Activated CD4-positive, alpha-beta T cell treated with anti-CD3 and anti-CD28 coated beads for 36 hours (primary cell): ENCODE measurements at regions of chr3 and their contacts with region 1.

Region 1: DNA sequence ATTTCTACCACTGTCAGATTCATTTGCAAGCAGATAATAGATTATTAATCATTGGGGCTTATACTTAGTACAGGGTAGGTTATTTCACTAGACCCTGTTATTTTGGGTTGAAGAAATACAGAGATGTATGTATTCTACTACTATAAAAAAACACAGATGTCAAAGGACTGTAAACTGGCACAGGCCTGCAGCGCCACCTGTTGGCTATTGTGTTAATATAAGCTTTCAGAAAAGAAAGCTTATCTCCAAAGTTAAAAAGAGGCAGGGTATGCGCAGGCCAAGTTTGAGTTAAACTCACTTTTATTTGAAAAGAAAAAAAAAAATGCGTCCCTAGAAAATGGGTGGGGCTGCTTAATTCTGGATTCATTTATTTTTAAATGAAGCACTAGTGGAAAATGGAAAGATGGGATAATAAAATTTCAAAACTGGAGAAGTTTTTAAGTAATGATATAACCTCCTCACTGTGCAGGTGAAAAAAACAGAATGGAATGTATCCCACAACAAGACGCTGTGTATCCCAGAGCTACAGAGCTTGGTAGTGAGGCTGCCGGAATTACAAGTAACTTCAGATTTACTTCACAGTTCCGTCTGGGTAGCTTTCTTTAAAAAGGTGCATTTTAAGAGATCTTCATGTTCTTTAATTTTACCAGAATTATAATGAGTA is 407.2 kb upstream of the TGFBR2 start:
- DNase-seq: peak; percentile 86
- ATAC-seq: peak; percentile 30
- H3K4me3 Mint-ChIP-seq: no peak overlapping the region
- H3K27ac Mint-ChIP-seq: no peak overlapping the region
- H3K4me1 Mint-ChIP-seq: peaks cover 2% of the 10 kb centered on the region
- H3K27me3 Mint-ChIP-seq: no peaks in the 10 kb centered on the region

Region 2: GRCh38 chr3:28667646-28668621 is 1531.3 kb before region 1 on chr3:
- CTCF ChIA-PET with region 1: no interaction called
- POLR2A ChIA-PET with region 1: no interaction called
- intact Hi-C with region 1: loop called in 1 of 2 experiments (anchors 5 kb)
- DNase-seq: peak; percentile 71
- ATAC-seq: peak; percentile 90
- H3K4me3 Mint-ChIP-seq: no peak overlapping the region
- H3K27ac Mint-ChIP-seq: peak overlapping the region; percentile 32
- H3K4me1 Mint-ChIP-seq: peaks cover 5% of the 10 kb centered on the region
- H3K27me3 Mint-ChIP-seq: peaks cover 15% of the 10 kb centered on the region

Region 3: DNA sequence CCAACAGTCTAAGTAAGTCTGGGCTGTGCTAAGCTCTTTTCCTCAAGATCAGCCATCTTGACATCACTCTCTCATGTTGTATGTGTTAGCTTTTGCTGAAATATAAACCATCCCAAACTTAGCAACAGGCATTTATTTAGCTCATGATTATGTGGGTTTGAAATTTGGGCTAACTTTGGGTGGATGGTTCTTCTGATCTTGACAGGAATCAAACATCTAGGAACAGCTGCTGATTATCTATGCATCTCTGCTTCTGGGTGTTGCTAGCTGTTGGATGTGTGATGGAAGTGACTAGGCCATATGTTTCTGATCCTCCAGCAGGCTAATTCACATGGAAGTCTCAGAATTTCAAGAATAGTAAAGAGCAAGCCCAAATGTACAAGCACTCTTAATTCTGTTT is 208.0 kb before region 1 on chr3:
- CTCF ChIA-PET with region 1: no interaction called
- POLR2A ChIA-PET with region 1: no interaction called
- intact Hi-C with region 1: no loop called
- DNase-seq: no peak
- ATAC-seq: no peak
- H3K4me3 Mint-ChIP-seq: no peak overlapping the region
- H3K27ac Mint-ChIP-seq: no peak overlapping the region
- H3K4me1 Mint-ChIP-seq: no peaks in the 10 kb centered on the region
- H3K27me3 Mint-ChIP-seq: peaks cover 7% of the 10 kb centered on the region

Region 4: GRCh38 chr3:30012941-30013543 is 186.2 kb before region 1 on chr3:
- CTCF ChIA-PET with region 1: interaction called, 25 read pairs
- POLR2A ChIA-PET with region 1: no interaction called
- intact Hi-C with region 1: loop called (anchors 1 to 10 kb)
- DNase-seq: peak; percentile 72
- ATAC-seq: no peak
- H3K4me3 Mint-ChIP-seq: no peak overlapping the region
- H3K27ac Mint-ChIP-seq: no peak overlapping the region
- H3K4me1 Mint-ChIP-seq: no peaks in the 10 kb centered on the region
- H3K27me3 Mint-ChIP-seq: no peaks in the 10 kb centered on the region

Region 5: DNA sequence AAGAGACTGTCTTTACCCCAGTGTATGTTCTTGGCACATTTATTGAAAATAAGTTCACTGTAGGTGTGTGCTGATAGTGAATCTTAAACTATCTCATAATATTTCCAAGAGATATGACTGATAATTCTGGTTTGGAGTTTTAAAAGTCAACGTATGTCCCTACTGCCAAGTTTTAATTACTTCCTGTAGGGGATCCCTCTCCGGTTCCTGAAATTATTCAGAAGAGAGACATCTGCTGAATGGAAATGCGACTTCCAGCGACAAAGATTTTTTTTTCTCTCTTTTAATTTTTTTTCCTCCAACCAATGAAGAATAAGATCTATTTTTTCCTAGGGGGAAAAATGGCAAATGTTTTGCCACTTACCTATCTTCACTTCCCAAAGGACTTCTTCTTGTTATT is 91.7 kb before region 1 on chr3:
- CTCF ChIA-PET with region 1: interaction called, 34 read pairs
- POLR2A ChIA-PET with region 1: no interaction called
- intact Hi-C with region 1: loop called in 1 of 2 experiments (anchors 2 kb)
- DNase-seq: no peak
- ATAC-seq: no peak
- H3K4me3 Mint-ChIP-seq: no peak overlapping the region
- H3K27ac Mint-ChIP-seq: no peak overlapping the region
- H3K4me1 Mint-ChIP-seq: no peaks in the 10 kb centered on the region
- H3K27me3 Mint-ChIP-seq: peaks cover 4% of the 10 kb centered on the region

Region 6: GRCh38 chr3:30188713-30189112 is 10.5 kb before region 1 on chr3:
- CTCF ChIA-PET with region 1: interaction called, 17 read pairs
- POLR2A ChIA-PET with region 1: no interaction called
- intact Hi-C with region 1: no loop called
- DNase-seq: no peak
- ATAC-seq: no peak
- H3K4me3 Mint-ChIP-seq: no peak overlapping the region
- H3K27ac Mint-ChIP-seq: no peak overlapping the region
- H3K4me1 Mint-ChIP-seq: no peaks in the 10 kb centered on the region
- H3K27me3 Mint-ChIP-seq: peaks cover 4% of the 10 kb centered on the region

Region 7: DNA sequence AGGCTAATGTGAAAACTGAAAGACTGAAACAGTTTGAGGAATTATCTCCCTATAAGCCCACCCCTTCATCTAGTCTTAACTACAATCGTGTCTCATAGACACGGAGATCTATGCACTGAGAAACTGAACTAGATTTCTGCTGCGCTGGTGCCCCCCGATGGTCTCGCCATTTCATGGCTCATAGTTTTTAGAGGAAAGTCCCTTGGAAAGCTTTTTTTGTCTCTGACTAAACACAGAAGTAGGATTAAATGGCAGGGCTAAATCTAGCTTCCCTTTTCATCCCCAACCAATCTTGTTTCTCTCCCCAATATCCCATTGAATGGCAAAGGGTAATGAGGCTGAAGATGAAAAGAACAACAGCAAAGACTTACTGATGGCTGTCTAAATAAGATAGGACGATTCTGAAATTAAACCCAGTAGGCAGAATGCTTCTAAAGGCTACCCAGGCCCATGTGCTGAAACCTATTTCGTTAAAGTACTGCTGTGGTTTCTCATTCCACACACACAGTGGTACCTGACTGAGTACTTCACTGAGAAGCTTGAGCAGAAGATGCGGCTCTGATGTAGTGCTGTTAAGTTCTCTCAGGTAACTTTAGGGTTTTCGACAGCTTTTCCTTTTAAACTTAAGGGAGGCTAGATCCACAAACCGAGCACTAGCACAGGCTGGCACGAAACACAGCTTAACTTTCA is 552.5 kb after region 1 on chr3:
- CTCF ChIA-PET with region 1: interaction called, 22 read pairs
- POLR2A ChIA-PET with region 1: no interaction called
- intact Hi-C with region 1: loop called (anchors 1 to 5 kb)
- DNase-seq: peak; percentile 84
- ATAC-seq: peak; percentile 72
- H3K4me3 Mint-ChIP-seq: no peak overlapping the region
- H3K27ac Mint-ChIP-seq: peak overlapping the region; percentile 23
- H3K4me1 Mint-ChIP-seq: peaks cover 47% of the 10 kb centered on the region
- H3K27me3 Mint-ChIP-seq: no peaks in the 10 kb centered on the region

Region 8: DNA sequence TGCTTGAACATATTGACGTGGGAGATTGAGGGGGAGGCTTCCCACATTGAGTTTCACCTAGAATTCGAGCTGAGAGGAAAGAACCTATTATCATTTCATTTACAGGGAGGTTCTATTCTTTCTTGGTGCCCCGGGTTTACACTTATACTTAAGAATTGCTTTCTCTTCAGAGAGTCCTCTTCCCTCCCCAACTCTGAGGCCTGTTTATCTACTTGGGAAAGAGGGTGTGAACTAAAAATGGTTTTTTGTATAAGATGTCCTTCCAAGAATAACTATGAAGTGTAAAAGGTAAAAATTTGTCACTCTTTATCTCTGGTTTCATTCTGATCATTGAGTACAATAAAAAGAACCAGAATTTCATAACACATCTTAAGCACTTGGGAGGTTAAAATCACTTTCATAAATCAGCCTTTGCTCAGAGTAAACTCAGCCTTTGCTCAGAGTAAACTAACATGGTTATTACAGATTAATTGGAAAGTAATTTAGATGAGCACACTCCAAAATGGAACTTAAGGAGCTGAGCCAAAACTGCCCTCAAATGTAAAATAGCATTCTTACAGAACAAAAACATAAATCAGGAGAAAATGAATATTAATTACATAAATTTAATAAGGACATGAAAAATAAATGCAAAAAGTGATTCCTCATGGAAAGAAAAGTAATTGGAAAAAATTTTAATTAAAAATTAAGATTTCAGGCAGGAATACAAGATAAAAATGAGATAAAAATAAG is 620.0 kb after region 1 on chr3:
- CTCF ChIA-PET with region 1: no interaction called
- POLR2A ChIA-PET with region 1: no interaction called
- intact Hi-C with region 1: no loop called
- DNase-seq: no peak
- ATAC-seq: peak; percentile 66
- H3K4me3 Mint-ChIP-seq: no peak overlapping the region
- H3K27ac Mint-ChIP-seq: no peak overlapping the region
- H3K4me1 Mint-ChIP-seq: peaks cover 8% of the 10 kb centered on the region
- H3K27me3 Mint-ChIP-seq: peaks cover 13% of the 10 kb centered on the region